Right lobe of liver (tissue), 6 donors: ENCODE measurements at regions of chr19 and their contacts with region 1.

Region 1: DNA sequence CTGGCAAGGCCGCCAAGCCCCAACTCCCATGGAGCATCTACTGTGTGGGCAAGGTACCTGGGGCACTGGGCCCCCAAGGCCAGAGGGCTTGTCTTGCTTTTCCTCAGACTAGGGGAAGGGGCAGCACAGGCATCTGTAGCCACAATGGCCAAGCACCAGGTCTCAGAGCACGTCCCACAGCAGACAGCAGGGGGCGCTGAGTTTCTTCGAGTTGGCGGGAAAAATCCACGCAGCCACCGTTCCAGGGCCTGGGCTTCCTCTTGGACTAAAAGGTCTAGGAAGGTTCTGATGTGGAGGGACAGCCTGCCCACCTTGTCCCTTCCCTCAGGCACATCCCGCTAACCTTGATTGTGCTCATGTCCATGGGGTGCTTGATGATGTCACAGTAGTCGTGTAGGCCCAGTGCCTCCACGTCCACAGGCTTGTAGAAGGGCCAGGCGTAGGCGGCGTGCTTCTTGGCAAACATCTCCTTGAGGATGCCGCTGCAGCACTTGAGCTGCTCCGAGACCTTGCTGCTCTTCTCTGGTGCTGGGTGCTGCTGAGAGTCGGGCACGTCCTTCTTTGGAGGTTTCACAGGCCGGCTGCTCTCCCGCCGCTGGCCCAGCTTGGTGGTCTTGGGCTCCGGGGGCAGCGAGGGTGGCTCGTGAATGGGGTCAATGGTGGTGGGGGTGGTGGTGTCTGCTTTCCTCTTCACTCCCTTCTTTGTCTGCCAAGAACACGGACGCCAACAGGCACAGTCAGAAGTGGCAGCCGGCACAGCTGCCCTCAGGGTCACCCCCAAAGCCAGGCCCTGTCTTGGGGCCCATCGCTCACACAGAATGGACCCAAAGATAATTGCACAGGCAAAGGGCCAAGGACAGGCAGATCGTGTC is 32.0 kb upstream of the EPHX3 start:
- DNase-seq: peak; percentile 70 to 72 (median 72)
- ATAC-seq: peak; percentile 23 to 60 (median 48)
- H3K4me3 ChIP-seq: no peak overlapping the region
- H3K27ac ChIP-seq: peak overlapping the region in 1 of 3 donors; percentile 57
- H3K4me1 ChIP-seq: peaks cover 2 to 38% (median 22%) of the 10 kb centered on the region in 4 donors
- H3K27me3 ChIP-seq: no peaks in the 10 kb centered on the region
- CTCF ChIP-seq: peak; percentile 62 to 82 (median 72)
- POLR2A ChIP-seq: no peak

Region 2: DNA sequence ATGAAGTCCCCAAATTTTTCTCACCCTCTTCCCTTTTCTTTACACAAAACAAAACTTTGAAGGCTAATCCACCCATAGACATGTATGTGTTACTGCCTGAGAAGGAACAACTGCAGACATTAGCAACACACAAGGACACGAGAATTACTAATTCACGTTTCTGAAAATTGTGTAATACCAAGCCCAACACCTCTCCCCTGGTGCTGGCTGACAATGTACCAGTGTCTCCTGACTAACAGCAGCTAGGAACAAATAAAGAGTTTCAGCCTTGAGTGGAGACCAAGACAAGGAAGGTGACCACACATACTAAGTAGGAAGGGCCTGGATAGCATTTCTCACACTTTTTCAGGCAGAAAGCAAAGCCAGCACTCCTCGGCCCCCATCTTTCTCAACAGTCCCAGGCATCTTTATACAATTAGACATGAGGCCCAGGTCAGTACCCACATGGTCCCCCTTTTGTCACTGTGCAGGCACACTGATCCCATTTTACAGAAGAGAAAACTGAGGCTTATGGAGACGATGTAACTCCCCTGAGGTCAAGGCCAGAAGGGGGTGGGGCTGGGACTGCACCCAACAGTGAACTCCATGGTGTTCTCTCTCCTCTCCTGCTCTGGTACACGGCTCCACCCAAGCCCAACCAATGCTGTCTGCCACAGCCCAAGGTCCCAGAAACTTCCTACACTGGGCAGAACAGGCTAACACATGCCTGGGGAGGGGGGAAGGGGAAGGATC is 59.4 kb after region 1 on chr19:
- intact Hi-C with region 1: loop called in 1 of 2 experiments (anchors 10 kb)
- DNase-seq: peak in 2 of 3 donors; percentile 56 to 66
- ATAC-seq: peak; percentile 49 to 67 (median 56)
- H3K4me3 ChIP-seq: no peak overlapping the region
- H3K27ac ChIP-seq: peak overlapping the region in 1 of 3 donors; percentile 78
- H3K4me1 ChIP-seq: peaks cover 2 to 82% (median 42%) of the 10 kb centered on the region in 4 donors
- H3K27me3 ChIP-seq: no peaks in the 10 kb centered on the region
- CTCF ChIP-seq: no peak
- POLR2A ChIP-seq: no peak

Region 3: DNA sequence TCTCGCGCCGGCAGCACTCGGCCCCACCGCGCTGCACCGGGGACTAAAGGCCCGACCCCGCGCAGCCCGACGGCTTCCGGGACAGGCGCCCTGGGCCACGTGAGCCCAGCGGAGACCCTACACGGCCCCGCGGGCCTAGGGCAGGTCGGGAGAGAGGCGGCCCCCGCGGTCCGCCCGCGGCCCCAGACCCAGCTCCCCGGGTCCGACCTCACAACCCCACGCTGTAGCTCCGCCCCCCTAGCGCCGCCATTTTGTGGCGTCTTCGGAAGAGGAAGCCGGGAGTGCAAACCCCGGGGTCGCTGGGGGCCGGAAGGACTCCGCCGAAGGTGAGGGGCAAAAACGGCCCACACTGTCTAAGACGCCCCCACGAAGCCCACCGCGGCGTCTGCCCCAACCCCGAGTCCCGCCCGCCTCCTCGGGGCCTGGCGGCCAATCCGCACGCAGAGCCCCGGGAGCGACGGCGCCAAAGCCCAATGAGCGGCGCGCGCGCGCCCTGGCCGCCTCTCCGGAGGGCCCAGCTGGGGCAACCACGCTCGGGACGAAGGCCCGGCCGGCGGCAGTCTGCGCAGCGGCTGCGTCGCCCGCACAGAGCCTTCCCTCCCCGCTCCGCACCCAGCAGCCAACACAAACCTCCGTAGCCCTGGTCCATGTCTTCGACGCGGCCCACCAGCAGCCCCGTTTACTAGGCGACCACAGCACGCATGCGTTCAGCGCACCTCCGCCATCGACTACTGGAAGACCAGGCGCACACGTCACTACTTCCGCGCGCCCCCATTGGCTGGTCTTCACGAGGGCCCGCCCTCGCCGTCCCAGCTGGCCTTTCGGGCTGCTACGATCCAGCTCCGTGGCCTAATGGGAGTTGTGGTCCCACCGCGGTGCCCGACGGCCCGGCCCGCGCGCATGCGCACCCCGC is 115.0 kb after region 1 on chr19 and contains the start of gene AKAP8:
- intact Hi-C with region 1: loop called in 1 of 2 experiments (anchors 10 kb)
- DNase-seq: peak; percentile 99
- ATAC-seq: peak; percentile 88 to 95 (median 92)
- H3K4me3 ChIP-seq: peak within 1 kb of the TSS; percentile 78 to 95 (median 94)
- H3K27ac ChIP-seq: peak within 1 kb of the TSS; percentile 93 to 98 (median 94)
- H3K4me1 ChIP-seq: peaks cover 0 to 44% (median 17%) of the 10 kb centered on the region in 4 donors
- H3K27me3 ChIP-seq: no peaks in the 10 kb centered on the region
- CTCF ChIP-seq: peak in 1 of 4 donors; percentile 3
- POLR2A ChIP-seq: peak; percentile 82
- total RNA-seq, gene AKAP8: 10.0 to 20.2 (median 13.3) TPM